ENCODE measurements at regions of chr9 and their contacts with region 1.

Region 1: GRCh38 chr9:4832786-4833579 is 40.2 kb downstream of the RCL1 start:
- DNase-seq: peak; percentile 80
- H3K4me3 Mint-ChIP-seq: no peak overlapping the region
- H3K27ac Mint-ChIP-seq: peak overlapping the region; percentile 91
- H3K4me1 Mint-ChIP-seq: peaks cover 47% of the 10 kb centered on the region
- H3K27me3 Mint-ChIP-seq: no peaks in the 10 kb centered on the region

Region 2: GRCh38 chr9:4740638-4741364 is 92.2 kb before region 1 on chr9 and contains the start of gene AK3:
- CTCF ChIA-PET with region 1: no interaction called
- POLR2A ChIA-PET with region 1: no interaction called
- intact Hi-C with region 1: loop called (anchors 1 kb)
- DNase-seq: peak; percentile 90
- H3K4me3 Mint-ChIP-seq: peak within 1 kb of the TSS; percentile 83
- H3K27ac Mint-ChIP-seq: peak within 1 kb of the TSS; percentile 78
- H3K4me1 Mint-ChIP-seq: peaks cover 34% of the 10 kb centered on the region
- H3K27me3 Mint-ChIP-seq: no peaks in the 10 kb centered on the region
- total RNA-seq, gene AK3: 33.8 to 34.5 TPM

Region 3: GRCh38 chr9:4792572-4793458 is 40.2 kb before region 1 on chr9 and contains the start of gene RCL1:
- CTCF ChIA-PET with region 1: interaction called, 9 read pairs
- POLR2A ChIA-PET with region 1: interaction called, 16 read pairs
- intact Hi-C with region 1: loop called (anchors 1 kb)
- DNase-seq: peak; percentile 98
- H3K4me3 Mint-ChIP-seq: peak within 1 kb of the TSS; percentile 93
- H3K27ac Mint-ChIP-seq: peak within 1 kb of the TSS; percentile 86
- H3K4me1 Mint-ChIP-seq: peaks cover 49% of the 10 kb centered on the region
- H3K27me3 Mint-ChIP-seq: no peaks in the 10 kb centered on the region
- total RNA-seq, gene RCL1: 26.0 to 28.2 TPM

Region 4: GRCh38 chr9:4866239-4866969 is 33.4 kb after region 1 on chr9:
- CTCF ChIA-PET with region 1: interaction called, 5 read pairs
- POLR2A ChIA-PET with region 1: no interaction called
- intact Hi-C with region 1: loop called (anchors 1 kb)
- DNase-seq: peak; percentile 25
- H3K4me3 Mint-ChIP-seq: peak overlapping the region; percentile 35
- H3K27ac Mint-ChIP-seq: peak overlapping the region; percentile 77
- H3K4me1 Mint-ChIP-seq: peaks cover 19% of the 10 kb centered on the region
- H3K27me3 Mint-ChIP-seq: no peaks in the 10 kb centered on the region

Region 5: DNA sequence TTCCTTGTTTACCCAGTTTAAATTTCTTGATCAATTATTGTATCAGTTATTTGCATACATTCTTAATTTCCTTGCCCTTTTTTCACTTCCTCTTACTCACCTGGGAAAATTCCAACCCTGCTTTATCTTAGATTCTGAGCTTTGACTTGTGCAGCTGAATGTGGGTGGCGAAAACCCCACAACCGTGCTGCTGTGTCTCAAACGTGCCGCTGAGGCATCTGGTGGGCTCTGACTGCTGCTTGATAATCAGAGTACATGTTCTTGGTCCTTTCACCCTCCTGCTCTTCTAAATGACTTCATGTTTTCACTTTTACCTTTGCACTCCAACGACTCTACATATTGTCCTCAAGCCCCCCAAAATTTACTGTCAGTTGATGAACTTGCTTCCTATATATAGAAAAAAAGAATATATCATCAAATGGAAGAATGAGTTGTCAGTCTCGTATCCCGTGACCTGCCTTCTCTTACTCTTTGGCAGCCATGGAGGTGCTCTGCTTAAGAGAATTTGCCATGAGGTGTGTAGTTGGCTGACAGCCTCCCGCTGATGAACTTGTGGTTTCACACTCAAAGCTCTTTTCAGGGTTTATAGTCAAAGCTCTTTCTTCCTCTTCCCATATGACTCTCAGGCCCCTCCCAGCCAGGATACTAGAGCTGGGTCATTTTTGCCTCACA is 138.1 kb after region 1 on chr9:
- CTCF ChIA-PET with region 1: no interaction called
- POLR2A ChIA-PET with region 1: interaction called, 6 read pairs
- intact Hi-C with region 1: loop called (anchors 1 kb)
- DNase-seq: peak; percentile 86
- H3K4me3 Mint-ChIP-seq: no peak overlapping the region
- H3K27ac Mint-ChIP-seq: no peak overlapping the region
- H3K4me1 Mint-ChIP-seq: peaks cover 26% of the 10 kb centered on the region
- H3K27me3 Mint-ChIP-seq: no peaks in the 10 kb centered on the region

Region 6: GRCh38 chr9:5450359-5451091 is 617.5 kb after region 1 on chr9 and contains the start of gene CD274:
- CTCF ChIA-PET with region 1: no interaction called
- POLR2A ChIA-PET with region 1: no interaction called
- intact Hi-C with region 1: loop called (anchors 10 kb)
- DNase-seq: peak; percentile 92
- H3K4me3 Mint-ChIP-seq: peak within 1 kb of the TSS; percentile 86
- H3K27ac Mint-ChIP-seq: peak within 1 kb of the TSS; percentile 90
- H3K4me1 Mint-ChIP-seq: peaks cover 59% of the 10 kb centered on the region
- H3K27me3 Mint-ChIP-seq: no peaks in the 10 kb centered on the region
- total RNA-seq, gene CD274: 28.3 to 32.4 TPM

Measured in activated CD4-positive, alpha-beta memory T cell treated with anti-CD3 and anti-CD28 coated beads for 36 hours (primary cell).